HEK293T (cell line): ENCODE measurements at regions of chr15 and their contacts with region 1.

Region 1: DNA sequence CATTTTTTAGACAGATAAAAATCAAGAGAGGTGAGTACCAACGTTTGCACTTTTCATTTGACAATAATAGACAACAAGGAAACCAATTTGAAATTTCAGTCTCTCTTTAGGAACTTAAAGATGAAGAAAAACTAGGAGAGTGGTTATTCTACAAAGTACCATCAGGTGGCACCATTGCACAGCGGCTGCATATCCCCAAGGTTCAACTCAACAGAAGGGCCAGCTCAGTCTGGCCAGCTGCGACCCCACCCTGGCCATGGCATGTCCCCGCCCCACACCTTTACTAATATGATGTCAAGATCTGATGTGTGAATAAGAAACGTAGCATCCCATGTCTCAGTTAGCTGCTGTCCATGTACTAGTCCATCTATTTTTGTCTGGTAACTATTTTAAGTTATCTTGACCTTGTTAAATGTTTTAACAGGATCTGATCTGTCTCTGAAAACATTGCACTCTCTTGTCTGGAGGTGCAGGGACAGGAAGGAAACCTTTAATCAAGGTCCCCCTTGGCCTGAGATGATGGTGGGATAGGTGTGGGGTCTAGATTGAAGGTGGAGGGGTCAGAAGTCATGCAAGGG is 35.5 kb upstream of the CGNL1 start:
- DNase-seq: peak; percentile 39

Region 2: DNA sequence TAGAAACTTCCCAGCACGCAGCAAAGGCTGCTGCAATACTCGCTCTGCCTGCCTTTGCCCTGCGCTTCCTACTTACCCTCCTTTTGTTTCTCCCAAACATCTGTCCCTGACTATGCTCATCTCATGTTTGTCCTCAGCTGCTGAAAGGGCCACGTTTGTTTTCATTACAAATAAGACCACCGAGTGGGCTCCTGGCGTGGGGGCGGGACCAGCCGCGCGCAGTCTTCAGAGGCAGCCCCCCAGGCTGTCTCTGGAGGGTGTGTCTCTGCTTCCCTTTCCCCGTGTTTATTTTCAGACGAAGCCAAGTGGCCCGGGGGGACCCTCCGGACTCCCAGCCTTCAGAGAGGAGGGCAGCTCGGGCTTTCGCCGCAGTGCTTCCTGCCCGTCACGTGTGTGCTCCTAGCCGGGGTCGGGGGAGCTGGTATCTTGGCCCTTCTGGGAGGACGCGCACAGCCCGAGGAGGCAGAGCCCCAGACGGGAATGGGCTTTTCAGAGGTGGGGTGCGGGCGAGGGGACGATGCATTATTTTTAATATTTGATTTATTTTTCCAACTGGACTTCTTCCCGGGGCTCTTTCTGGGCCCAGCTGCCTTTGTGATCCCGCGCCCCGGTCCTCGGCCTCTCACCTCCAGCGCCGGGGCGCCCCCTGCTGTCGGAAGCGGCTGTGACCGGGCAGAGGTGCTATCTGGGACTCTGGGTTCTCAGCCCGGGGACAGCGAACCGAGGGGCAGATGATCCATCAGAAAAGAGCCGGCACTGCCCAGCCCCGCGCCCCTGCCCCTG is 34.4 kb before region 1 on chr15:
- CTCF ChIA-PET with region 1: no interaction called
- POLR2A ChIA-PET with region 1: no interaction called
- DNase-seq: peak; percentile 81

Region 3: GRCh38 chr15:57541805-57542504 is 201.2 kb after region 1 on chr15:
- CTCF ChIA-PET with region 1: interaction called, 10 read pairs
- POLR2A ChIA-PET with region 1: no interaction called
- DNase-seq: peak; percentile 53